Activated CD4-positive, alpha-beta T cell treated with anti-CD3 and anti-CD28 coated beads for 36 hours (primary cell): ENCODE measurements at regions of chr4 and their contacts with region 1.

Region 1: DNA sequence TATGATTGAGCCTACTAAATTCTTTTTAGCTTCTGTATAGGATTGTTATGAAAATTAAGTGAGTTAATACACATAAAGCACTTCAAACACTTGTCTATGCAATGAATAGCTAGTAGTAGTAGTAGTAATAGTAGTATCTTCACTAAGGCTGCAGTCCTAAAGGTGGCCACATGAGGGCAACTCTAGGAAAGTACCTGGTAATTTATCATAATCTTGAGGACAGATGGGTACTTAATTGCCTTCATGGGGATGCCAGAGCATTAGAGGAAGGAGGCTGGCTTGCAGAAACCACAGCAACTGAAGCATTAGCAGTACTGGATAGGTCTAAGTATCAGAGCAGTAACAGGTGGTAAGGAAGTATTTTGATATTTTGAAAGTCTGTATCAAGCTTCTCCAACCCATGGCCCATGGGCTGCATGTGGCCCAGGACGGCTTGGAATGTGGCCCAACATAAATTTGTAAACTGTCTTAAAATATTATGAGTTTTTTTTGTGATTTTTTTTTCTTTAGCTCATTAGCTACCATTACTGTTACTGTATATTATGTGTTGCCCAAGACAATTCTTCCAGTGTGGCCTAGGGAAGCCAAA is 17.3 kb downstream of the NIPAL1 start:
- DNase-seq: peak; percentile 78
- ATAC-seq: peak; percentile 37
- H3K4me3 Mint-ChIP-seq: no peak overlapping the region
- H3K27ac Mint-ChIP-seq: peak overlapping the region; percentile 29
- H3K4me1 Mint-ChIP-seq: peaks cover 46% of the 10 kb centered on the region
- H3K27me3 Mint-ChIP-seq: no peaks in the 10 kb centered on the region

Region 2: DNA sequence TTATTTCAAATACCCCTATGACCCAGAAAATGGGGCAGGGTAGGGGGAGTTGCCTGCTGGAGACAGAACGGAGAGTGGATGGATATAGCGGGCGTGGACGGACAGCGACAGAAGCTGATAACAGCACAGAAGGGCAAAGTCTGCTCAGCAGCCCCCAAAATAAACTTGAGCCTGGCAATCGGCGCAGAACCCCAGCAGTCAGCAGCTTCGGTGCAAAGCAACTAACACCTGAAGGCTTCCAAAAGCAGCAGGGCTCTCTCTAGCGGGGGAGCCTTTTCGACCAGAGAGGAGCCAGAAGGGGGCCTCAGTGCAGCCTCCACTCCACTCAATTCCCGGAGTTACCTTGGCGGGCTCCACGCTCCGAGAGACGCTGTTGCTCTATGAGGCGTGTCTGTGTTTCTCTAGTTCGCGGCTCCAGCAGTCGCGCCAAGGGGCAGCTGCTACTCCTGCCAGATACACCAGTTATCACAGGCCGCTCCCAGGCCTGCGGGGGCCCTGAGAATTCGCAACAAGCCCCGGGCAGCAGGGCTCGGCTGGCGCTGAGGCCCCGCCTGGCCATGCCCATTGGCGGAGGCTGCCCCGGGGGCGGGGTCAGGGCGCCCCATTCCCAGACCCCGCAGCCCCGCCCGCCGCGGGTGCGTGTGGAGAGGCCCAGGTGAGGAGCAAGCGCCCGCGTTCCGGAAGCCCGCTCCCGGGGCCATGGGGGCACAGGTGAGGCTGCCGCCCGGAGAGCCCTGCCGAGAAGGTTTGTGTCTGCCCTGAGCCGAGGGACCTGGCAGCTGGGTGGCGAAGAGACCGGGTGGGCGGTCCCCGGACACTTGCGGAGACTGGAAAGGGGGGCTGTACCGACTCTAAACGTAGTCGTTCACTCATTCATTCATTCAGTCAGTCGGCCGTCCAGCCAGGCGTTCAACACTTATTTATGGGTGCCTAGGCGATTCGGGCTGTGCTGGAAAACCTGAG is 17.5 kb before region 1 on chr4 and contains the starts of genes CNGA1 and NIPAL1:
- CTCF ChIA-PET with region 1: interaction called, 64 read pairs
- POLR2A ChIA-PET with region 1: interaction called, 3 read pairs
- intact Hi-C with region 1: loop called (anchors 1 kb)
- DNase-seq: peak; percentile 80
- ATAC-seq: peak; percentile 86
- H3K4me3 Mint-ChIP-seq: peak within 1 kb of the TSS; percentile 76
- H3K27ac Mint-ChIP-seq: peak within 1 kb of the TSS; percentile 66
- H3K4me1 Mint-ChIP-seq: peaks cover 29% of the 10 kb centered on the region
- H3K27me3 Mint-ChIP-seq: peaks cover 16% of the 10 kb centered on the region
- total RNA-seq, gene CNGA1: 0.16 to 0.30 TPM
- total RNA-seq, gene NIPAL1: 1.6 to 1.8 TPM

Region 3: DNA sequence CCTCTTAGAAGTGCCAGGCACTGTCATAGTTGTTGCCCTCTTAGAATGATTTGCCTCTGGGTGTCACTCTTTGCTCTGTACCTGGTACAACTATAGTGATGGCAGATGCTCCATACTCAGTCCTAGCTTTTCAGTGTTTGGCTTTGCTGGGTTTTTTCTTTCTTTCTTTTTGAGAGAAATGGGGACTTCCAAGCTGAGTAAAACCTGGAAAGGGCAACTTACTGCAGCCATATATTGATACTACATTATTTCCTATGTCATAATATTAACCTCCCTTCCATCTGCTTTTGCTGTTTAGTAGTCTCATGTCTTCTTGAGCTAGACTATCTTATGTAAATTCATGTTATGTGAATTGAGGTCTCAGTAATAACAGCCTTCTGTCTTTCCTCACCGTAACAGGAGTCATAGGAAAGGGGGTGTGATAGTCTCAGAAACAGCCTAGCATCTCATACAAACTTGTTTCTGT is 31.7 kb after region 1 on chr4:
- CTCF ChIA-PET with region 1: interaction called, 6 read pairs
- POLR2A ChIA-PET with region 1: no interaction called
- intact Hi-C with region 1: loop called in 1 of 2 experiments (anchors 1 kb)
- DNase-seq: peak; percentile 22
- ATAC-seq: peak; percentile 94
- H3K4me3 Mint-ChIP-seq: no peak overlapping the region
- H3K27ac Mint-ChIP-seq: no peak overlapping the region
- H3K4me1 Mint-ChIP-seq: peaks cover 23% of the 10 kb centered on the region
- H3K27me3 Mint-ChIP-seq: no peaks in the 10 kb centered on the region

Region 4: DNA sequence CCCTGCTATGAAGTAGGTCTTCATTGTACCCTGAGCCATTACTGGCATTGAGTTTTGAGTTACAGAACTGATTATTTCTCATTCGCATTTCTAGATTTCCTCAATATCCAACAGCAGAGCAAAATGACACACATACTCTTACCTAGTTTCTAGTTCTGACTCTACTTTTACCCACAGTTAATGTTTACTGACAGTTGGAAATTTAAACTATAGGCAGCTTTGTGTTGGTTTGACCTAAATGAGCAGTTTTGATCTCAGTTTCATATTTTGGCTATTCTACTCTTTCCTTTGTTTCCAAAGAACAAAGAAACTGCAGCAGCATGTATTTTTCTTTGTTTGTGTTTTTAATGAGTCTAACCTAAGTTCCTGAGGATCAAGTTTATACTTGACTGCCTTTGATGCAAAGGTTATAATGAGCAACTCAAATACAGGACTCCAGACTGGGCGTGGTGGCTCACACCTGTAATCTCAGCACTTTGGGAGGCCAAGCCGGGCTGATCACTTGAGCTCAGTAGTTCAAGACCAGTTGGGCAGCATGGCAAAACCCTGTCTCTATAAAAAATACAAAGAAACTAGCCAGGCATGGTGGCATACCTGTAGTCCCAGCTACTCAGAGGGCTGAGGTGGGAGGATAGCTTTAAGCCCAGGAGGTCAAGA is 69.7 kb after region 1 on chr4:
- CTCF ChIA-PET with region 1: interaction called, 20 read pairs
- POLR2A ChIA-PET with region 1: interaction called, 7 read pairs
- intact Hi-C with region 1: loop called (anchors 1 kb)
- DNase-seq: peak; percentile 44
- ATAC-seq: peak; percentile 92
- H3K4me3 Mint-ChIP-seq: no peak overlapping the region
- H3K27ac Mint-ChIP-seq: peak overlapping the region; percentile 89
- H3K4me1 Mint-ChIP-seq: peaks cover 38% of the 10 kb centered on the region
- H3K27me3 Mint-ChIP-seq: no peaks in the 10 kb centered on the region

Region 5: GRCh38 chr4:48141048-48141447 is 107.1 kb after region 1 on chr4:
- CTCF ChIA-PET with region 1: interaction called, 7 read pairs
- POLR2A ChIA-PET with region 1: interaction called, 3 read pairs
- intact Hi-C with region 1: loop called in 1 of 2 experiments (anchors 2 kb)
- DNase-seq: no peak
- ATAC-seq: peak; percentile 44
- H3K4me3 Mint-ChIP-seq: no peak overlapping the region
- H3K27ac Mint-ChIP-seq: no peak overlapping the region
- H3K4me1 Mint-ChIP-seq: peaks cover 47% of the 10 kb centered on the region
- H3K27me3 Mint-ChIP-seq: no peaks in the 10 kb centered on the region

Region 6: DNA sequence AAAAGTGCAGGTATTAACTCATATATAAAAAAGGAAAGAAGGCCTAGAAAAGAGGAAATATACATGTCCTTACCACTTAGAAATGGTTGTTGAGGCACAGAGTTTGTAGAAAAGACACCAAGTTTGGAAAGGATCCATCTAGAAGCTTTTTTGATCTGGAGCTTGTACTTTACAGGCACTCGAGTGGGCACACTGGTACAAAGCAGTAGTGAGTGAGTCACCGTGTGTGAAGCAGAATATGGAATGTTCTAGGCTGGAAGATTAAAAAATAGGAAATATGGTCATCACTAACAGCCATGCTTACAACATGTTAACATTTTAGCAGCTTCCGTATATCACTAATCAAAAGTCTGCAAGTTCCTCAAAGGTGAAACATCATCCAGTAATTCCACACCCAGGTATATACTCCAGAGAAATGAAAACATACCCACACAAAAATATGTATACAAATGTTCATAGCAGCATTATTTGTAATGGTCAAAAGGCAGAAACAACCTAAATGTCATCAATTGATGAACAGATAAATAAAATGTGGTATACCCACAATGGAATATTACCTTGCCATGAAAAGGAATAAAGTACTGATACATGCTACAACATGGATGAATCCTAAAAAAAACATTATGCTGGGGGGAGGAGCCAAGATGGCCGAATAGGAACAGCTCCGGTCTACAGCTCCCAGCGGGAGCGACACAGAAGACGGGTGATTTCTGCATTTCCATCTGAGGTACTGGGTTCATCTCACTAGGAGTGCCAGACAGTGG is 676.7 kb after region 1 on chr4:
- CTCF ChIA-PET with region 1: no interaction called
- POLR2A ChIA-PET with region 1: no interaction called
- intact Hi-C with region 1: no loop called
- DNase-seq: no peak
- ATAC-seq: no peak
- H3K4me3 Mint-ChIP-seq: no peak overlapping the region
- H3K27ac Mint-ChIP-seq: no peak overlapping the region
- H3K4me1 Mint-ChIP-seq: peaks cover 19% of the 10 kb centered on the region
- H3K27me3 Mint-ChIP-seq: no peaks in the 10 kb centered on the region